GM12878 (cell line): ENCODE measurements at regions of chr10 and their contacts with region 1.

Region 1: GRCh38 chr10:110803830-110804338 is 67.8 kb upstream of the PDCD4 start:
- DNase-seq: peak; percentile 47
- ATAC-seq: peak; percentile 85
- H3K4me3 ChIP-seq: no peak overlapping the region
- H3K27ac ChIP-seq: peak overlapping the region; percentile 91
- H3K4me1 ChIP-seq: peaks cover 33% of the 10 kb centered on the region
- H3K27me3 ChIP-seq: no peaks in the 10 kb centered on the region
- CTCF ChIP-seq: peak; percentile 76 to 83 (median 81)
- EP300 ChIP-seq: no peak
- POLR2A ChIP-seq: peak; percentile 25; the same call in 1 of the 2 replicates
- RAD21 ChIP-seq: peak; percentile 90

Region 2: DNA sequence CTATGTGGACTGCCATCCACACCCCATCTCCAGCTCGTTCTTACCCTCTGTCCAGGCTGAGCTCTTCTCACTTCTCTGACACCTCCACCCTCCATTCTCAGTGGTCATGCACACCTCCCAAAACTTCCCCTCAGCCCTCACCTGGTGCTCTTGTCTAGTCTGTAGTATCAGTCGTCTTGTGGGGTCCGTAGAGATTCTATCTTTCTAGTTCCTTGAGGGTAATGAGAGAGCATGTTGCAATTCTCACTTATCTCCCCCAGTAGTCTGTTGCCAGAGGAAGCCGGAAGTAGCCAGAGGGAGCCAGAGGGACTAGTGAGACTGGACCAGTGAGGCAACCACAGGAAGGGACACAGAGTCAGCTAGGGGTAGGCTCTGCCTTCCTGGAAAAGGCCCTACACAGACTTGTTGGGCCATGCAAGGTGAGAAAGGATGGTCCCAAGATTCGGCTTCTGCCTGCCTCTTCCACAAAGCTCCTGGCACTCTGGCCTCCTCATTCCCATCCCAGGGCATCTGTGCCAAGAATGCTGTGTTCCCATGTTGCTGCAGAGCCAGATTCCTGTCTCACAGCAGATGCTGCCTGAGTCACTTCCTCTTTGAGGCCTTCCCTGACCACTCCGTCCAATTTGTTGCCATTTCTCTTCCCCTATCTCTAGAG is 356.8 kb before region 1 on chr10:
- CTCF ChIA-PET with region 1: no interaction called
- POLR2A ChIA-PET with region 1: no interaction called
- RAD21 ChIA-PET with region 1: no interaction called
- SMC1A ChIA-PET with region 1: no interaction called
- in situ Hi-C with region 1: no loop called
- intact Hi-C with region 1: no loop called
- DNase-seq: no peak
- ATAC-seq: no peak; the same call in 2 of the 3 replicates
- H3K4me3 ChIP-seq: no peak overlapping the region
- H3K27ac ChIP-seq: no peak overlapping the region
- H3K4me1 ChIP-seq: peaks cover 6% of the 10 kb centered on the region
- H3K27me3 ChIP-seq: no peaks in the 10 kb centered on the region; a peak in 1 of 4 replicates
- CTCF ChIP-seq: no peak
- EP300 ChIP-seq: no peak
- POLR2A ChIP-seq: no peak
- RAD21 ChIP-seq: no peak

Region 3: GRCh38 chr10:110684800-110685446 is 119.0 kb before region 1 on chr10:
- CTCF ChIA-PET with region 1: no interaction called
- POLR2A ChIA-PET with region 1: no interaction called
- RAD21 ChIA-PET with region 1: no interaction called
- SMC1A ChIA-PET with region 1: no interaction called
- in situ Hi-C with region 1: no loop called
- intact Hi-C with region 1: no loop called
- DNase-seq: no peak
- ATAC-seq: peak; percentile 27; the same call in 1 of the 3 replicates
- H3K4me3 ChIP-seq: no peak overlapping the region
- H3K27ac ChIP-seq: no peak overlapping the region
- H3K4me1 ChIP-seq: no peaks in the 10 kb centered on the region
- H3K27me3 ChIP-seq: no peaks in the 10 kb centered on the region
- CTCF ChIP-seq: no peak
- EP300 ChIP-seq: no peak
- POLR2A ChIP-seq: no peak
- RAD21 ChIP-seq: no peak

Region 4: GRCh38 chr10:110746254-110746826 is 57.5 kb before region 1 on chr10:
- CTCF ChIA-PET with region 1: interaction called, 41 read pairs
- POLR2A ChIA-PET with region 1: interaction called, 7 read pairs
- RAD21 ChIA-PET with region 1: interaction called, 54 read pairs
- SMC1A ChIA-PET with region 1: interaction called, 45 read pairs
- in situ Hi-C with region 1: no loop called
- intact Hi-C with region 1: loop called (anchors 1 kb)
- DNase-seq: no peak
- ATAC-seq: peak; percentile 73
- H3K4me3 ChIP-seq: no peak overlapping the region
- H3K27ac ChIP-seq: peak overlapping the region; percentile 94; the same call in 1 of the 2 replicates
- H3K4me1 ChIP-seq: peaks cover 31% of the 10 kb centered on the region
- H3K27me3 ChIP-seq: no peaks in the 10 kb centered on the region
- CTCF ChIP-seq: peak; percentile 66 to 78 (median 76)
- EP300 ChIP-seq: no peak
- POLR2A ChIP-seq: no peak
- RAD21 ChIP-seq: peak; percentile 96

Region 5: GRCh38 chr10:110820321-110820814 is 16.5 kb after region 1 on chr10:
- CTCF ChIA-PET with region 1: interaction called, 9 read pairs
- POLR2A ChIA-PET with region 1: interaction called, 7 read pairs
- RAD21 ChIA-PET with region 1: interaction called, 24 read pairs
- SMC1A ChIA-PET with region 1: interaction called, 21 read pairs
- in situ Hi-C with region 1: no loop called
- intact Hi-C with region 1: no loop called
- DNase-seq: no peak
- ATAC-seq: no peak
- H3K4me3 ChIP-seq: no peak overlapping the region
- H3K27ac ChIP-seq: no peak overlapping the region
- H3K4me1 ChIP-seq: peaks cover 27% of the 10 kb centered on the region
- H3K27me3 ChIP-seq: no peaks in the 10 kb centered on the region
- CTCF ChIP-seq: no peak
- EP300 ChIP-seq: no peak
- POLR2A ChIP-seq: no peak
- RAD21 ChIP-seq: no peak

Region 6: GRCh38 chr10:110852255-110852896 is 48.5 kb after region 1 on chr10:
- CTCF ChIA-PET with region 1: interaction called, 70 read pairs
- POLR2A ChIA-PET with region 1: interaction called, 48 read pairs
- RAD21 ChIA-PET with region 1: interaction called, 57 read pairs
- SMC1A ChIA-PET with region 1: interaction called, 64 read pairs
- in situ Hi-C with region 1: no loop called
- intact Hi-C with region 1: no loop called
- DNase-seq: no peak
- ATAC-seq: peak; percentile 28
- H3K4me3 ChIP-seq: no peak overlapping the region
- H3K27ac ChIP-seq: peak overlapping the region; percentile 39
- H3K4me1 ChIP-seq: peaks cover 53% of the 10 kb centered on the region
- H3K27me3 ChIP-seq: no peaks in the 10 kb centered on the region
- CTCF ChIP-seq: no peak
- EP300 ChIP-seq: no peak
- POLR2A ChIP-seq: no peak
- RAD21 ChIP-seq: no peak

Region 7: GRCh38 chr10:110883924-110884323 is 80.0 kb after region 1 on chr10:
- CTCF ChIA-PET with region 1: interaction called, 196 read pairs
- POLR2A ChIA-PET with region 1: interaction called, 9 read pairs
- RAD21 ChIA-PET with region 1: interaction called, 115 read pairs
- SMC1A ChIA-PET with region 1: interaction called, 221 read pairs
- in situ Hi-C with region 1: no loop called
- intact Hi-C with region 1: no loop called
- DNase-seq: no peak
- ATAC-seq: peak; percentile 5; the same call in 2 of the 3 replicates
- H3K4me3 ChIP-seq: no peak overlapping the region; the same call in 1 of the 2 replicates
- H3K27ac ChIP-seq: no peak overlapping the region
- H3K4me1 ChIP-seq: peaks cover 6% of the 10 kb centered on the region
- H3K27me3 ChIP-seq: no peaks in the 10 kb centered on the region
- CTCF ChIP-seq: no peak
- EP300 ChIP-seq: no peak
- POLR2A ChIP-seq: no peak
- RAD21 ChIP-seq: no peak

Region 8: GRCh38 chr10:110918643-110919363 is 114.9 kb after region 1 on chr10 and contains the start of gene BBIP1:
- CTCF ChIA-PET with region 1: interaction called, 27 read pairs
- POLR2A ChIA-PET with region 1: interaction called, 14 read pairs
- RAD21 ChIA-PET with region 1: interaction called, 33 read pairs
- SMC1A ChIA-PET with region 1: interaction called, 48 read pairs
- in situ Hi-C with region 1: no loop called
- intact Hi-C with region 1: no loop called
- DNase-seq: peak; percentile 99
- ATAC-seq: peak; percentile 86
- H3K4me3 ChIP-seq: peak within 1 kb of the TSS; percentile 71
- H3K27ac ChIP-seq: peak within 1 kb of the TSS; percentile 96
- H3K4me1 ChIP-seq: peaks cover 7% of the 10 kb centered on the region; the same call in 1 of the 2 replicates
- H3K27me3 ChIP-seq: no peaks in the 10 kb centered on the region
- CTCF ChIP-seq: no peak
- EP300 ChIP-seq: no peak; a peak in 1 of 4 replicates
- POLR2A ChIP-seq: peak; percentile 92
- RAD21 ChIP-seq: no peak
- polyA plus RNA-seq, gene BBIP1: 34.7 to 40.8 TPM

Region 9: DNA sequence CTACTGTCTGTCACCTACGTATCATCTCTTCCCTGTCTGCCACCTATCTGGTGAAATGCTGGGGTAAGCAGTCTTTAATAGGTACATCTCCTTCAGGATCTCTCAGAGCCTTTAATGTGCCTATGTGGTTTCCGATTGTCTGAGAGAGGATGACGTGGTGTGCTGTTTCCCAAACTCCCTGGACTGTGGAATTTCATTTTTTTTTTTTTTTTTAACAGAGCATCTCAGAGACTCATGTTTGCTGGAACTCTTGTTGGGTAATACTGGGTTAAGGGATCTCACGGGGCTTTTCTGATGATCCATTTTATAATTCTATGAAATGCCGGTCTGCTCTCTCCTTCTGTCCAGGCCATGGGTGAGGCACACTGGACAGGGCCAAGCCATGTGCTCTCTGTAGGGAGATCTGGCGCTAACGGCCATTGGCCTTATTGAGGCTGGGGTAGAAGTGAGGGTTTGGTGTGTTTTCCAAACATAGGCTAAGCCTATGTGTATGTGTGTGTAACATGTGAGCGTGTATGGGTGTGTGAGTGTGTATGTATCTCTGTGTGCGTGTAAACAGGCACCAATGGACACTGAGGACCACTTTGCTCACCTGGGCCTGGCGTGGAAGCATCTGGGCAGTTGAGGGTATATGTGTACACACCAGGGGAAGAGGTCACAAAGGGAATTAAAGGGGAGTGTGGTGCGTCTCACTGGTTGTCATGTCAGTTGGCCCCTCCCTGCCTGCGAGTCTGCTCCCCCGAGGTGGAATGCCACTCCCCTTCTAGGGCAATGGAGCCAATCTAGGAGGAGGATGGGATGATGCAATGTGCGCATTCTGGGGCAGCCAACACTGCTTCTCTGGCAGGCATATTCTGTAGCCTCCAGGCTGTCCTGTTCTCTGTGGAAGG is 280.7 kb after region 1 on chr10:
- CTCF ChIA-PET with region 1: no interaction called
- POLR2A ChIA-PET with region 1: no interaction called
- RAD21 ChIA-PET with region 1: no interaction called
- SMC1A ChIA-PET with region 1: no interaction called
- in situ Hi-C with region 1: no loop called
- intact Hi-C with region 1: no loop called
- DNase-seq: no peak
- ATAC-seq: no peak
- H3K4me3 ChIP-seq: no peak overlapping the region
- H3K27ac ChIP-seq: no peak overlapping the region
- H3K4me1 ChIP-seq: no peaks in the 10 kb centered on the region
- H3K27me3 ChIP-seq: peaks cover 0 to 1% of the 10 kb centered on the region in 2 experiments; a peak in 2 of 4 replicates
- CTCF ChIP-seq: no peak
- EP300 ChIP-seq: no peak
- POLR2A ChIP-seq: no peak
- RAD21 ChIP-seq: no peak